GM13977 (cell line): ENCODE measurements at regions of chr1 and their contacts with region 1.

Region 1: GRCh38 chr1:75233302-75233929 is 99.2 kb downstream of the LHX8 start:
- DNase-seq: peak; percentile 10
- CTCF ChIP-seq: peak; percentile 72

Region 2: GRCh38 chr1:75067975-75068374 is 165.4 kb before region 1 on chr1:
- in situ Hi-C with region 1: no loop called
- DNase-seq: no peak
- CTCF ChIP-seq: no peak

Region 3: DNA sequence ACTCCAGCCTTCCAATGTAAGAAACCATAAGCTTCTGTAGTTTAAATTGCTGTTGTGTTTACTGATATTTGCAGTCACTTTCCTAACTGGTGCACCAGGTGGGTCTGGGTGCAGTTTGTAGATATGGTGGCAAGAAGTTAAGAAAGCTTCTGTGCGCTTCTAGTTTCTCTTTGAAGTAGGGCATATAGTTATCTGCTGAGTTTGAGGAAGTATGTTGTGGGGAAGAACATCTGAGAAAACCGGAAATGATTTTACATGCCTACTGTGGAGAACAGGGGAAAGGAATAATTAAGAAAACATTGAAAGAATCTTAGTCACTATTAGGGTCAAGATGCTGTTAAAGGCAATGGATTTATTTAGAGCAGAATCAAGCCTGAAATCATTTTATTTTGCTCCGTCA is 392.4 kb after region 1 on chr1:
- in situ Hi-C with region 1: loop called (anchors 10 kb)
- DNase-seq: no peak
- CTCF ChIP-seq: no peak